ENCODE measurements at regions of chr18 and their contacts with region 1.

Region 1: DNA sequence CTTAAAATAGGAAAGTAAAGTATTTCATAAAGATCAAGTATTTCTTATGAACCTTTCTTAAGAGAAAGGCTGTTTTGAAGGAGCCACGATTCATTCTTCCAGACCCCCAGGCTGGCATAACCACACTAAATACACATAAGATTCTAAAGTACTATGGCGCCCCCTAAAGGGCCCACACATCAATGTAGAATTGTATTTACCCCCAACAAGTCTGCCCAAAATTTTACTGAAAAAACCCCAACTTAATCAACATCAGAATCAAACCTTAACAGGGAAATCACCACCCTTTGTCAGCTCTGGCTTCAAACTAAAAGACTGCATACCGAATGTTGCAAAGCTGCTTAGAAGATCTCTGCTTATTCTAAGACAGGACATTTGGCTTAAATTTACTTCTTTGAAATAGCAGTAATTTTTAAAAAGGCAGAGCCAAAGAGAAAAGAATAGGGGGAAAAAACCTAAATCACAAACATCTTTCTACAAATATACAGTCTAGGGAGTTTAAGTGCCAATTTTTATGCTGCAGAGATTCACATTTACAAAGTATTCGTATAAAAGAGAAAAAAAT is 20.4 kb upstream of the BCL2 start:
- DNase-seq: peak in 2 of 7 donors; percentile 32 to 47
- H3K4me3 ChIP-seq: no peak overlapping the region
- H3K27ac ChIP-seq: no peak overlapping the region
- H3K4me1 ChIP-seq: peaks cover 4 to 6% of the 10 kb centered on the region in 2 donors
- H3K27me3 ChIP-seq: no peaks in the 10 kb centered on the region
- CTCF ChIP-seq: peak in 5 of 6 experiments; percentile 13 to 50 (median 32)
- POLR2A ChIP-seq: no peak

Region 2: DNA sequence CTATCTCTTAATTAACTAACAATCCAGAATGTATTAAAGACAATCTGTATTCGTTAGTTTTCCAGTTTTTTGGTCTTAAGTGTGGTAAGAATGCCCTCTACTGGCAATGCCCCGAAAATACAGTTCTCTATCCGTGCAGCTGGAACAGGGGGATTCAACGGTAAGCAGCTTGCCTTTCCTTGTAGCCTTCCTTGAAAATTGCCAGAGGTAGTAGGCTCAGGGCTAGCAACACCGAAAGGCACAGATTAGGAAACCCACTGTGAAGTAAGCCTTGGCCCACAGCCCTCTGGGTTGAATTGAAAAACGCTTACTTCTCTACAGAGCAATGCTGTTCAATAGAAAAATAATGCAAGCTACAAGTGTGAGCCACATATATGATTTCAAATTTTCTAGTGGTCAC is 99.3 kb after region 1 on chr18:
- intact Hi-C with region 1: loop called in 1 of 2 experiments (anchors 10 kb)
- DNase-seq: peak in 6 of 7 donors; percentile 31 to 69 (median 42)
- H3K4me3 ChIP-seq: no peak overlapping the region
- H3K27ac ChIP-seq: no peak overlapping the region
- H3K4me1 ChIP-seq: peaks cover 0 to 6% of the 10 kb centered on the region in 2 donors
- H3K27me3 ChIP-seq: peaks cover 3% of the 10 kb centered on the region
- CTCF ChIP-seq: peak; percentile 66 to 88 (median 78)
- POLR2A ChIP-seq: no peak